OCI-LY7 (cell line): ENCODE measurements at regions of chr1 and their contacts with region 1.

Region 1: DNA sequence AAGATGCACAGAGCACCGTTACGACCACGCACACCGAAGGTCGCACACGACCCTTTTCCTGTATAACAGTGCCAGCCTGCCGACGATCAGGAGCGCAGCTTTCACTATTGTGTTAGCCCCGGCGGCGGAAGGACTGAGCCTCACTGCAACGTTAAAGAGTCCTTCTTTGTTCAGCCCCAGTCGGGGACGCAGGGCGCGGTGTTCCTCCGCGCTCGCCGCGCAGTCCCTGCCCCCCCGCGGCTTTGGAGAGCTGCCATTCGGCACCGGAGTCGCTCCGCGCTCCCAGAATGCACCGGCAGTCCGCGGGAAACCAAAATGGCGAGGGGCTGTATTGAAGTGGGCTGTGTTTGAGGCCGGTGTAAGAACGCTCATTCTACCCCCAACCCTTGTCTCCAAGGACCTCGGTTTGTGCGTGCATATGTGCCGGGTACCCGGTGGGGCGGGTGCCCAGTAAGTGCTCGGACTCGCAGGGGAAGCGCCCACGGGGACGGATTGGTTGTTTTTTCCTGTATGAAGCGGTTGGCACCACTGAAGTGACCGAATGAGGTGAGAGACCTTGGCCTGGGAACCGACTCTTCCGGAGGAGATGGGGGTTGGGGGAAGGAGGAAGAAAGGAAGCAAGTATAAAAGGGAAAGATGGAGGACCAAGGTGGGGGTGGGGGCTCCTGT is at the start of gene MTF2:
- DNase-seq: peak; percentile 99
- H3K4me3 ChIP-seq: peak within 1 kb of the TSS; percentile 84
- H3K27ac ChIP-seq: peak within 1 kb of the TSS; percentile 87
- H3K4me1 ChIP-seq: peaks cover 45% of the 10 kb centered on the region
- CTCF ChIP-seq: no peak
- total RNA-seq, gene MTF2: 48.1 and 51.7 TPM in 2 replicates

Region 2: DNA sequence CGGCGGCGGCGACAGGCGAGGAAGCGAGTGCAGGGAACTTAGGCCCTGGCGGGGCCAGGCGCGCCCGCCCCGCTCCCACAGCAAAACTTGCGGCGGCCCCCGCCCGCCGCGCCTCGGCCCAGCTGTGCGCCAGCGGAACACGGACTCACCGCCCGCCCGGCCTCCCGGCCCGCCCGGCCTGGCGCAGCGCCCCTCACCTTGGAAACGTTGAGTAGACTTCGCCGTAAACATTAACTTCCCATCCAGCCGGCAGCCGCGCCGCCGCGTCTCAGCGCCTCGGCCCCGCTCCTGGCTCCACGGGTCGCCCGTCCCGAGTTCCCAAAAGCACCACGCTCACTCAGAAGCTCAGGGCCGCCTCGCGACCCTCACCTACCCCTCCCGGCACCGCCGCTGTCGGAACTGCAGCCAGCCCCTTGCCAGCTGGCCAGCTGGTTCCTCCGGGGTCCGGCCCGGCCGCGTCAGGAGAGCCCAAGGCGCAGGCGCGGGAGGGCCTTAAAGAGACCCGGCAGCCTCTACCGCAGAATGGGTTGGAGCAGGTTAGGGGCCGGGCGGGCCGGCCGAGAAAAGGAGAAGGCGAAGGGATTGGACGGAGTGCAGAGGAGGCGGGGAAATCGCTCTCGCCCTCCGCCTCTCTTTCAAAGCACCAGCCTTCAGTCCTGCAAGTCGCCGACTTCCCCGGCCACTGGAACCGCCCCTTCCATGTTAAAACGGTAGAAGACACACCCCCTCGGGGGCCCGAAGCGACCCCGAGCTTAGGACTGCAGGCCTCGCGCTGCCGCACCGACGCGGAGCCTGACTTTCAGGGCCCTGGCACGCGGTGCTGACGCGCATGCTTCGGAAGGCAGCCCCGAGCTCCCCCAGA is 294.2 kb before region 1 on chr1 and contains the start of gene EVI5:
- CTCF ChIA-PET with region 1: interaction called, 12 read pairs
- POLR2A ChIA-PET with region 1: no interaction called
- intact Hi-C with region 1: no loop called
- DNase-seq: peak; percentile 97
- H3K4me3 ChIP-seq: peak within 1 kb of the TSS; percentile 88
- H3K27ac ChIP-seq: peak within 1 kb of the TSS; percentile 60
- H3K4me1 ChIP-seq: peaks cover 14% of the 10 kb centered on the region
- CTCF ChIP-seq: no peak
- total RNA-seq, gene EVI5: 15.1 and 27.3 TPM in 2 replicates

Region 3: DNA sequence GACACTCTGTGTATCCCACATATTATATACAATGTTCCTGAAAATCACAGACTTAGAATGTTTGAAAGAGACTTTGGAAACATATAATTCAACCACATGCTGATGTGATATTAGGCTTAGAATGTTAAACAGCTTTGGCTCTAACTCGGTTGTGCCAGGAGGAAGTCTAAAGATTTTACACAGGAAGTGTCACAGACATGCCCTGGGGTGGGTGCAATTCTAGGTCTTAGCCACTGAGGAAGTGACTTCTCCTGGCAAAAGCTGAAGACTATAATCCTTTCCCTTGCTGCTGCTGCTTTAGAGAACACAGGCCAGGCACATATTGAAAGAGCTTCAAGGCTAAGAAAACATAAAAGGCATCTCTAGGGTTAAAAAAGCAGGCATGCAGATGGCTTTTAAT is 196.3 kb before region 1 on chr1:
- CTCF ChIA-PET with region 1: no interaction called
- POLR2A ChIA-PET with region 1: no interaction called
- intact Hi-C with region 1: no loop called
- DNase-seq: peak; percentile 68
- H3K4me3 ChIP-seq: peak overlapping the region; percentile 11
- H3K27ac ChIP-seq: peak overlapping the region; percentile 61
- H3K4me1 ChIP-seq: peaks cover 60% of the 10 kb centered on the region
- CTCF ChIP-seq: no peak; the same call in 1 of the 2 replicates

Region 4: DNA sequence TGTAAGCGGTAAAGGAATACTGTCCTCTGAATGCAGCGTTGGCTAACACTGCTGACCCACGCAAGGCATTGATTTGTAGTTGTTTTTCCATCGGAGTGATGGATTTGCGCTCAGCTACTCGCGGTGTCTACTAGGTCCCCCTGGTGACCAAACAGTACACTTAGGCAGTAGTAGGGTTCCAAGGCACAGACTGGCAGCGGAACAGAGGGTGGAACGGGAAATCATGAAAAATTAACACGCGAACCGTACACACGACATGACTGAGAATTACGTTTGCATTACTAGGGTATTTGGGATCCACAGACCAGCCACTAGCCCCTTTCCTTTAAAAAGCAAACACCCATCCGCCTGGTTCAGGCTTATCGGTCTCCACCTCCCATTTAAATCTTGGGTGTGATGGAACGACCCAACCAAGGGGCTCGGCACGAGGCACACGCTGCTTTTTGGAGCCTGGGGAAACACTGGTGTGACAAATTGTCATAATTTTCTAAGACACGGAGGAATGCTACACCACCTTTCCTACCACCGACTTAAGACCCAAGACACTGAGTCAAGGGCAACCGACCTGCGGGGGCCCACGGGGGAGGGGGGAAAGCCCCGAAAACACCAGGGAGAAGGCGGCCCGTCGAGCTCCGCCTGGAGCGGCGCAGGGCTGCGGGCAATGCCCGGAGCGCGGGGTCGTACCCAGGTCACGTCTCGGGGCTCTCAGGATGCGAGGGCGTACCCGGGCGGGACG is 118.6 kb before region 1 on chr1:
- CTCF ChIA-PET with region 1: interaction called, 6 read pairs
- POLR2A ChIA-PET with region 1: interaction called, 11 read pairs
- intact Hi-C with region 1: loop called (anchors 5 kb)
- DNase-seq: peak; percentile 90
- H3K4me3 ChIP-seq: peak overlapping the region; percentile 93
- H3K27ac ChIP-seq: peak overlapping the region; percentile 92
- H3K4me1 ChIP-seq: peaks cover 73% of the 10 kb centered on the region
- CTCF ChIP-seq: peak; percentile 91

Region 5: DNA sequence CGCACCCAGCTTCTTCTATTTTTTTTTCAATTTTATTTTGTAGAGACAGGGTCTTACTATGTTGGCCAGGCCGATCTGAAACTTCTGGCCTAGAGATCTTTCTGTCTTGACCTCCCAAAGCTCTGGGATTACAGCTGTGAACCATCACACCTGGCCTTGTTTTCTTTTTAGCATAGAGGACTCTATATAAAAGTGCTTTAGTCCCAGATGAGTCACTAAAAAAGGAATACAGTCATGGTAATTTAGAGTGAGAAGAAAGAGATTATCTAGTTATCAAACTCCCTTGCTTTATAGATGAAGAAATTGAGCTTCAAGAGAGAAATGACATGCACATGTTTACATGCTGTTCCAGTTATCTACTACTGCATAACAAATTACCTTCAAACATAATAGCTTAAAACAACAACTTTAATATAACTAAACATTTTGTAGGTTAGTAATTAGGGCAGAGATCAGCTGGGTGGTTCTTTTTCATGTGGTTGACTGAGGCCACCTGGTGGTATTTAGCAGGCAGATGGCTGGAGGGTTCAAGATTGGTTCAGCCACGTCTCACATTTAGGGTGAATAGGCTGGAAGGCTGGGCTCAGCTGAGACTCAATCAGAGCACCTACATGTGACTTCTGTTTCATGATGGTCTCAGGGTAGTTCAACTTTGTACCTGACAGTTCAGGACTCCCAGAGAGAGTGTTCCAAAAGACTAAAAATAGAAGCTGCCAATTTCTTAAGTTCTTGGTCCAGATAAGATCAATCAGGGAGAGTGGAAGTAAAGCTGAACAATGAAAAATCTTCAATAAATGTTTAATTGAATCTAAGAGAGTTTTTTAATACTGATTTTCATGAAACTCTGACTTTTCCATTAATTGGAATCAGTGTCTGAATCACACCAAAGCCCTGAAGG is 17.0 kb before region 1 on chr1:
- CTCF ChIA-PET with region 1: interaction called, 3 read pairs
- POLR2A ChIA-PET with region 1: interaction called, 23 read pairs
- intact Hi-C with region 1: no loop called
- DNase-seq: peak; percentile 86
- H3K4me3 ChIP-seq: no peak overlapping the region
- H3K27ac ChIP-seq: peak overlapping the region; percentile 44
- H3K4me1 ChIP-seq: peaks cover 28% of the 10 kb centered on the region
- CTCF ChIP-seq: peak; percentile 99

Region 6: GRCh38 chr1:93148001-93148400 is 68.9 kb after region 1 on chr1:
- CTCF ChIA-PET with region 1: no interaction called
- POLR2A ChIA-PET with region 1: no interaction called
- intact Hi-C with region 1: loop called (anchors 2 kb)
- DNase-seq: no peak
- H3K4me3 ChIP-seq: no peak overlapping the region
- H3K27ac ChIP-seq: no peak overlapping the region
- H3K4me1 ChIP-seq: no peaks in the 10 kb centered on the region
- CTCF ChIP-seq: no peak

Region 7: GRCh38 chr1:93190432-93190831 is 111.3 kb after region 1 on chr1:
- CTCF ChIA-PET with region 1: no interaction called
- POLR2A ChIA-PET with region 1: no interaction called
- intact Hi-C with region 1: no loop called
- DNase-seq: no peak
- H3K4me3 ChIP-seq: no peak overlapping the region
- H3K27ac ChIP-seq: no peak overlapping the region
- H3K4me1 ChIP-seq: peaks cover 16% of the 10 kb centered on the region
- CTCF ChIP-seq: no peak

Region 8: DNA sequence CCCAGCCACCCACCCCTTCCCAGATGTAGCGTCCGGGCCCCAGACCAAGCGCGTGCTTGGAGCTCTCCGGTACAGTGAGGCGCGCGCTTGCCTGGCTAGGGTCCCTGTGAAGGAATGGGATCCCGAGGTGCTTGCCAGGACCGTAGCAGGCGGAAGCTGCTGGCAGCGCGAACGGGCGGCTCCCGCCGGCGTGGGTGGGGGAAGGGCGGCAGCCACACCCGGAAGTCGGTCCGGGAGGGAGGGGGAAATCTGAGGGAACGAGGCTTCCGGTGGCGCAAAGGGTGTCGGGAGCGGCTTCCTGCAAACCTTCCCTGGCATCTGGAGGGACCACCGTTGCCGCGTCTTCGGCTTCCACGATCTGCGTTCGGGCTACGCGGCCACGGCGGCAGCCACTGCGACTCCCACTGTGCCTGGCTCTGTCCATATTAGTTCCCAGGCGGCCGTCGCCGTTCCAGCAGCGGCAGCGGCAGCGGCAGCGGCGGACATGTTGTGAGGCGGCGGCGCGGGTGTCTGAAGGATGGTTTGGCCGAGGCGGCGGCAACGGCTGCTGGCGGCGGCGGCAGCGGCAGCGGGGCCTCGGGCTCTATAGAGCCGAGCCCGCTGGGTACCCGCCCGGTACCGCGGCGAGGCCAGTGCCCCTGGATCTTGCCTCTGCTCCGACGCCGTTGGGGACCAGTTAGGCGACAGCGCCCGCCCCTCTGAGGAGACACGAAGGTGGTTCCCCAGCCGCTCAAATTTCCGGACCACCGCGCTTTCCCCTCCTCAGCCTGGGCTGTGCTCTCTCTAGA is 266.7 kb after region 1 on chr1 and contains the start of gene DR1:
- CTCF ChIA-PET with region 1: no interaction called
- POLR2A ChIA-PET with region 1: interaction called, 5 read pairs
- intact Hi-C with region 1: loop called (anchors 5 kb)
- DNase-seq: peak; percentile 92
- H3K4me3 ChIP-seq: peak within 1 kb of the TSS; percentile 87
- H3K27ac ChIP-seq: peak within 1 kb of the TSS; percentile 74
- H3K4me1 ChIP-seq: peaks cover 20% of the 10 kb centered on the region
- CTCF ChIP-seq: no peak
- total RNA-seq, gene DR1: 61.3 and 81.3 TPM in 2 replicates